HAP-1 (cell line): ENCODE measurements at regions of chr6 and their contacts with region 1.

Region 1: GRCh38 chr6:30311101-30311500 is 15.6 kb upstream of the TRIM39 start:
- DNase-seq: no peak
- H3K4me3 ChIP-seq: no peak overlapping the region
- H3K4me1 ChIP-seq: no peaks in the 10 kb centered on the region
- H3K27me3 ChIP-seq: no peaks in the 10 kb centered on the region

Region 2: DNA sequence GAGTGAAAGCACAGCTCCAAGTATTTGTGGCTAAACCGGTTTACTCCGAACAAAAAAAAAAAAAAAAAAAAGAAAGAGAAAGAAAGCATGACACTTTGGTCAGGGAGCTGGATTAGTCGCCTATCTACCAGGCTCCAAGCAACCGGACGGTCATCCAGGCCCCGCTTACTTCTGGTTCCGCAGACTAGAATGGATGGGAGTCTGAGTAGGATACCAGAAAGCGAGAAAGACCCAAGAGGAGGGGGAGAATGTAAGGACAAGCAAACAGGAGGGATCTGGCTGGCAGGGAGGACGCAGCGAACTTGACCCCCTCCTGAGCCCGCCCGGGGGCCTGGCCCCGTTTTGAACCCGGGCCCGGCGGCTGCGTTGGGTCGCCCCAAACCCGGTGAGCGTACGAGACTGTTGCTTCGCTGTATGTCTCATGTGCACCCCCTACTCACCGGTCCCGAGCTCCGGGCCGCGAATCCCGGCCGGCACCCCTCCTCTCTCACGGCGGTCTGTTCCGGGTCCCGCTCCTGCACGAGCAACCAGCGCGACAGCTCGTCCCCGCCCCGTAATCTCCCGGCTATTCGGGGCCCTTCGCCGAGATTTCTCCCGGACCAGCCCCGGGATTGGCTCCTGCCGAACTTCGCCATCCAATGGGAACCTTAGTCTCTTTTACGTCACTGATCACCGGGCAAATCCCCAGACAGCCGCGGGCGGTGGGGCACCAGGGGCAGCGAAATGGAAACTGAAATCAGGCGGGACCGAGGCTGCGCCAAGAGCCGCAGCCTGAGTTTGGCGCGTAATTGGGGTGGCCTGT is 98.0 kb before region 1 on chr6 and contains the start of gene TRIM26:
- in situ Hi-C with region 1: loop called (anchors 10 kb)
- DNase-seq: peak; percentile 94 to 97
- H3K4me3 ChIP-seq: peak within 1 kb of the TSS; percentile 91
- H3K4me1 ChIP-seq: peaks cover 30% of the 10 kb centered on the region
- H3K27me3 ChIP-seq: no peaks in the 10 kb centered on the region

Region 3: DNA sequence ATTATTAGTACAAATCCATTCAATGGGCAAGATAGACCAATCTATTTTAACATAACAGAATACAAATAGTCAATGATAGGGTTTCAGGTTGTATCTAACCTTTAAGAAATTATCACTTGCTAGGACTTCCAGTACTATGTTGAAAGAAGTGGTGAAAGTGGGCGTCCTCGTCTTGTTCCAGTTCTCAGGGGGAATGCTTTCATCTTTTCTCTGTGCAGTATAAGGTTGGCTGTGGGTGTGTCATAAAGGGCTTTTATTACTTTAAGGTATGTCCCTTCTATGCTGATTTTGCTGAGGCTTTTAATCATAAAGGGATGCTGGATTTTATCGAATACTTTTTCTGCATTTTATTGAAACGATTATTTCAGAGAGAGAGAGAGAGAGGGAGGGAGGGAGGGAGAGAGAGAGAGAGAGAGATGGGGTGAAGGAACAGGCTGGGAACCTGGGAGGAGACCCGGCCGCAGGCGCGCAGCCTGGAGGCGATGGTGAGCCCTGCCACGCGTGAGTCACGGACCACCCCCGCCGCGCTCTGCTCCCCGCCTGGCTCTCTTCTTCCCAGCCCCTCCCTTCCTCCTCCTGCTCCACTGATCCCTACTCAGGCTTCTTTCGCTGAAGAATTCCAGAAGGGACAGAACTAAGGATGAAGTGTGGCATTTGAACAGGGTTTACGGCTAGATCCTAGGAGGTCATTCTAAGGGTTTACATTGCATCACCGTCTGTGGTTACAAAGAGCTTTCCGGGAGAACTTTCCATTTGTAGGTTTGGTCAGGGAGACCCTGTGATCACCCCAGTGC is 132.8 kb after region 1 on chr6:
- in situ Hi-C with region 1: no loop called
- DNase-seq: no peak
- H3K4me3 ChIP-seq: no peak overlapping the region
- H3K4me1 ChIP-seq: no peaks in the 10 kb centered on the region
- H3K27me3 ChIP-seq: peaks cover 75% of the 10 kb centered on the region

Region 4: DNA sequence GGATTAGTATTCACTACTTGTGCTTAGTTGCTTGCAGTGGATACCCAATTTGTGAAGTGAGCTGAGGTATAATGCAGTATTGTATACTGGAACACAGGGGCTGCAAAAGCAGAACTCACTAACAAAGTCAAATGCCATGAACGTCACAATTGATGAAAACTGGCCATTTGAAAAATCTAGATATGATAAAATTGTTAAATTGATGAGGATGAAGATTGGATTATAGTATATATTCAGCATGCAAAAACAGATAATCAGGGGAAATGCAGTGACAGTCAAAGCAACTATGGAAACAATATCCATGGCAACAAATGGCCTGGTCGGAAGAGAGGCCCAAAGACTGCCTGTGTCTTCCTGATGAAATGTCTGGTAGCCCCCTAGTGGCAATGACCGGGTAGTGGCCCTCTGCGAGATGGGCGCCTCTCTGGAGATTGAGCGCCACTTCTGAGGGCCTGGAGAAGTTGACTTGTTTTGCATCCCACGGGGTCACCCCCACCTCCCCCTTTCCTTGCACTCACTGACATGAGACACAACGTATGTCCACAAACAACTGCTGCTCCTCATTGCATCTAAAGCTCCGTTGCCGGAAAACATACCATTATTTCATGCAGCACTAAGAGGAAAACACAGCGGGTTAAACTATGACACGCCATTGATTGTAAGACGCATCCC is 757.7 kb after region 1 on chr6:
- in situ Hi-C with region 1: no loop called
- DNase-seq: peak; percentile 80 to 86
- H3K4me3 ChIP-seq: no peak overlapping the region
- H3K4me1 ChIP-seq: peaks cover 25% of the 10 kb centered on the region
- H3K27me3 ChIP-seq: no peaks in the 10 kb centered on the region